MCF 10A (cell line): ENCODE measurements at regions of chr20 and their contacts with region 1.

Region 1: DNA sequence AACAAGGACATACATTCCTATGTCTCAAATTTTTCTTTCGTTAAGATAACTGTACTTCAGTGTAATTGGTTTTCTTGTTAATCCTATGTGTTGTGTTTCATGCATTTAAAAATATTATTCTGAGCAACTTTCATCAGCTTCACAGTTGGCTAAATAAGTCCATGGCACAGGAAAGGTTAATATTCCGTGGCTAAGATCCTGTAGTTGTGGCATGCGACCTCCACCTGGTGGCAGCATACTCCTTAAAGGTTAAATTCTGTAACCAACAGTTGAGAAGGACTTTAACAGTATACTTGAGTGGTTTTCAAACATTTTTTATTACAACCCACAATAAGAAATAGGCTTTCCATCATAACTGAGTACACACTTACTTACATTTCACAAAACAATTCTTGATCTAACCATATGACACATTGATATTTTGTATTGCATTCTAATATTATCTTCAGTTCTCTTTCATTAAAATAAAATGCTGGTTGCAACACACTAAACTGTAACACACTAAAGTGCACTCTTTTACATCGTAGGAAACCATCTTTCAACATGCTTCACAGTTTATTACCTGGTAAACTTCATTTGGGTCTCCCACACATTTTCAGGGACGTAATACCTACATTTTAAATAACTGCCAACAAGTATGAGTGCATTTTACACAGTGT is 118.3 kb downstream of the SLX4IP start:
- DNase-seq: peak; percentile 76
- H3K4me3 Mint-ChIP-seq: no peak overlapping the region
- H3K27ac Mint-ChIP-seq: no peak overlapping the region
- H3K4me1 Mint-ChIP-seq: peaks cover 27% of the 10 kb centered on the region
- H3K27me3 Mint-ChIP-seq: no peaks in the 10 kb centered on the region
- CTCF ChIP-seq: peak; percentile 82

Region 2: GRCh38 chr20:10469599-10469998 is 83.9 kb before region 1 on chr20:
- CTCF ChIA-PET with region 1: interaction called, 11 read pairs
- POLR2A ChIA-PET with region 1: interaction called, 3 read pairs
- intact Hi-C with region 1: loop called (anchors 1 kb)
- DNase-seq: peak; percentile 81
- H3K4me3 Mint-ChIP-seq: no peak overlapping the region
- H3K27ac Mint-ChIP-seq: peak overlapping the region; percentile 59
- H3K4me1 Mint-ChIP-seq: peaks cover 13% of the 10 kb centered on the region
- H3K27me3 Mint-ChIP-seq: no peaks in the 10 kb centered on the region
- CTCF ChIP-seq: peak; percentile 61

Region 3: GRCh38 chr20:10541668-10542411 is 11.6 kb before region 1 on chr20:
- CTCF ChIA-PET with region 1: interaction called, 20 read pairs
- POLR2A ChIA-PET with region 1: interaction called, 7 read pairs
- intact Hi-C with region 1: no loop called
- DNase-seq: no peak
- H3K4me3 Mint-ChIP-seq: no peak overlapping the region
- H3K27ac Mint-ChIP-seq: peak overlapping the region; percentile 94
- H3K4me1 Mint-ChIP-seq: peaks cover 33% of the 10 kb centered on the region
- H3K27me3 Mint-ChIP-seq: no peaks in the 10 kb centered on the region
- CTCF ChIP-seq: no peak

Region 4: DNA sequence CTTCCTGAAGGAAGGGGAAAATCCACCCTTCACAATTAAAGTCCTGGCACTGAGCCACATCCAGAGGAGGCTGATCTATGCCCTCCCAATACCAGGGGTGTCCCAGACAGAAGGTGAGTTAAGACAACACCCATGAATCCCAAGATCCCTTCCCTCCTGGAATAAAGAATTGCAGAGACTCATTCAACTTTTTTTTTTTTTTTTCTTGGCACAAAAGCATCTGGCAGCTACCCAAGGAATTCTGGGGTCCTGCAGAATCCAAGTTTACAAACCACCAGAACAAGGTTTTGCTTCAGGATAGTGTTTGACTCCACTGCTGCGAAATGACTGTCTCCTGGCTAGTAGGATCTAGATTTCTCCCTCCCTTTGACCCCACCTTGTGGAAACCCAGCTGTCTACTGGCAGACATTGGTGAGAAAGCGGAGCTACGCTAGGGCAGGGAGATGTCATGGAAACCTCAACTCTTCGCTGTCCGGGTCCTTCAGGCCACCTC is 82.9 kb after region 1 on chr20:
- CTCF ChIA-PET with region 1: interaction called, 20 read pairs
- POLR2A ChIA-PET with region 1: interaction called, 36 read pairs
- intact Hi-C with region 1: no loop called
- DNase-seq: peak; percentile 90
- H3K4me3 Mint-ChIP-seq: peak overlapping the region; percentile 29
- H3K27ac Mint-ChIP-seq: peak overlapping the region; percentile 85
- H3K4me1 Mint-ChIP-seq: peaks cover 44% of the 10 kb centered on the region
- H3K27me3 Mint-ChIP-seq: no peaks in the 10 kb centered on the region
- CTCF ChIP-seq: no peak

Region 5: DNA sequence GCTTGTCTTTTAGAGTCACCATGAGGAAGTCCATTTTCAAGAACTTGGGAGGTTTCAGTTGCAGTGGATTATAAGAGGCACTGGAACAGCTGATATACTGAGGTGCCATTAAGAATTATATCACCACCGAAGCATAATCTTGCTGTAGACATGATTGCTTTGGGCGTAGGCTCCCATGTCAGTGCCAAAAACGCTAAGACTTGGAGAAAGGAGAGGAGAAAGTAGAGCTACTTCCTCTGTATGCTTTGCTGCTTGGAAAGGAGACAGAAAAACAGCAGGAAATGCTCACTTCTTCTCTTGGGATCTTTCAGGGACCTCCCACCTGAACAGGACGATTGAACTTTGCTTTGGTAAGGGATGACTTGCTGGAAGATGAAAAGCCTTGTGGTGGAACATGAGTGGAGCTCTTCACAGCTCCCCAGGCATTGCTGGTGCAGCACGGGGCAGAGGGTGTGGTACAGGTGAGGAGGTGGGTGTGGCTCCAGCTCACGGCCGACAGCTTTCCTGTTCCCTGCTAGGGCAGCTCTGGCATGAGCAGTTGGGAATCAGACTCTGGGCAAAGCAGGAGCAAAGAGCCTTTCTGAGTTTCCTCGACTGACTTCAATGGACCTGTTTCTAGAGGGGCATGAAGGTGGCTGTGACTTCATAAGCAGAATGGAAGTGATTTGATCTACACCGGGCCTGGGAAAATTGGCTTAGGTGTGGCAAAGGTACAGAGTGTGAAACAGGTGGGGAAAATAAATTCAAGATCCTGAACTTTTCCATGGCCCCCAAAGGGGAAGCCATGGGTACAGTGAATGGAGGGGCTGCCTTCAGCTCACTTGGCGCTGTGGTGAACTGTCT is 310.8 kb after region 1 on chr20:
- CTCF ChIA-PET with region 1: interaction called, 4 read pairs
- POLR2A ChIA-PET with region 1: no interaction called
- intact Hi-C with region 1: loop called (anchors 5 kb)
- DNase-seq: peak; percentile 45
- H3K4me3 Mint-ChIP-seq: peak overlapping the region; percentile 54
- H3K27ac Mint-ChIP-seq: peak overlapping the region; percentile 91
- H3K4me1 Mint-ChIP-seq: peaks cover 56% of the 10 kb centered on the region
- H3K27me3 Mint-ChIP-seq: no peaks in the 10 kb centered on the region
- CTCF ChIP-seq: no peak

Region 6: DNA sequence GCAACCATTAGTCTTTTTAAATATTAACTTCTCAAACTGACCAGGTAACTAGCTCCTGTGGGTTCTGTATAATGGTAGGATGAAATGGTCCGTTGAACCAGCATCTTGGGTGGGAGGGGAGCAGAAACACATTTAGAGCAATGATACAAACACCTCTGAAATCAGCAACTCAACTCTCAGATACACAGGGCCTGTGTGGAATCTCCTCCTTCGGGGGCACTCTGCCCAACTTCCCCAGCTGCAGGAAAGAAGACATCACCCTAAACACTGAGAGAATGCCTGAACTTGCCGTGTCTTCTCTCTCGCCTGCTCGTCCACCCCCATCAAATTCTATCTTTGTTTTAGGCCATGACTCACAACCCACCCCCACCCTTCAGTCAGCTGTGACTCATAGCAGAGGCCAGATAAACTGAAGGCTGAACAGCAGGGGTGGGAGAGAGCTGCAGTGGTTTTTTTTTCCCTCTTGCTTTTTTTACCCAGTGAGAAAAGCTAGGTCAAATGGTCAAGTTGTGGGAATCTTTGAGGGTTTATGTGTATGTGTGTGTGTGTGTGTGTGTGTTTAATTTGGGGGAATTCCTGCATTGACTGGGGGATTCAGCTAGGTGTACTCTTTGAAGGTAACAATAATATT is 713.8 kb after region 1 on chr20:
- CTCF ChIA-PET with region 1: interaction called, 9 read pairs
- POLR2A ChIA-PET with region 1: interaction called, 4 read pairs
- intact Hi-C with region 1: loop called (anchors 2 kb)
- DNase-seq: peak; percentile 95
- H3K4me3 Mint-ChIP-seq: peak overlapping the region; percentile 8
- H3K27ac Mint-ChIP-seq: peak overlapping the region; percentile 76
- H3K4me1 Mint-ChIP-seq: peaks cover 21% of the 10 kb centered on the region
- H3K27me3 Mint-ChIP-seq: no peaks in the 10 kb centered on the region
- CTCF ChIP-seq: no peak

Region 7: DNA sequence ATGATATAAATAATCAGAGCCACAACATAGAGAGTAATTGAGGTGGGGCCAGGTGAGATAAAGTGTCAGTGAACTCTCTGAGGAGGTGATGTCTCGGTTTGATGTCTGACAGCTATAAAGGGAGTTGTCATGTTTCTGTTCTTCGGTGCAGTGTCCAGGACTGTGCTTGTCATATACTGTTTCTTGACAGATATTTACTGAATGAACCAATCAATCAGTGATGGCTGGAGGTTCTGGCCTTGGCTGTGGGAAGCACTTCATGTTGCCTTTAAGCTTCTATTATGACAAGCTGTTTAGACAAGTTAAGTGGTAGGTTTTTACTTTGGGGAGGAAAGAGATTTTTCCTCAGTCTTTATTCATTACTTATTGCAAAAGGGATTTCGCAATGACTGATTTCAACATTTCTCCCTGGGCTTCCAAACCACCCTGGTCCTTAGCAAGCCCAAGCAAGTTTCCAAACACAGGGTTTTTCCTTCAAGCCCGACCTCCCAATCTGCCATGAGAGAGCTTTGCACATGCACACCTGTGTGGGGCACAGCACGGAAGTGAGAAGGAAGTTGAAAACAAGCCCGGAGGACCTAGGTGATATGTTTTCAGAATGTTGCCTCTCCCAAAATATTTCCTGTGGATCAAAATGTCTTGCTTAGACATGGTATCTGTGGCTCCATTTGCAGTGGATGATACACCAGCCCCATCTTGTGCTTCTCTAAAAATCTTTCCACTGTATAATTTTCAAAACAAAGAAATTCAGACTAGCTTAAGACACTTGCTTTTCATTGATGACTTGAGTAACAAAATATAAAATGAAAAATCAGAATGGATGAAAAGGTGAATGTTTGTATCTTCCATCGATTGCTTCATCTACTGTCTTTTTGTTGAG is 796.9 kb after region 1 on chr20:
- CTCF ChIA-PET with region 1: interaction called, 6 read pairs
- POLR2A ChIA-PET with region 1: interaction called, 3 read pairs
- intact Hi-C with region 1: loop called (anchors 10 kb)
- DNase-seq: peak; percentile 95
- H3K4me3 Mint-ChIP-seq: peak overlapping the region; percentile 39
- H3K27ac Mint-ChIP-seq: peak overlapping the region; percentile 24
- H3K4me1 Mint-ChIP-seq: peaks cover 24% of the 10 kb centered on the region
- H3K27me3 Mint-ChIP-seq: no peaks in the 10 kb centered on the region
- CTCF ChIP-seq: peak; percentile 15